Adrenal gland (tissue), 19 donors: ENCODE measurements at regions of chr15 and their contacts with region 1.

Region 1: GRCh38 chr15:31338879-31339557 is 12.4 kb downstream of the KLF13 start:
- DNase-seq: peak; percentile 53 to 93 (median 84)
- H3K4me3 ChIP-seq: no peak overlapping the region
- H3K27ac ChIP-seq: peak overlapping the region in 4 of 5 donors; percentile 56 to 73 (median 62)
- H3K4me1 ChIP-seq: peaks cover 25 to 83% of the 10 kb centered on the region in 2 donors
- H3K27me3 ChIP-seq: no peaks in the 10 kb centered on the region
- CTCF ChIP-seq: no peak
- POLR2A ChIP-seq: no peak

Region 2: GRCh38 chr15:31352911-31353811 is 14.1 kb after region 1 on chr15:
- intact Hi-C with region 1: loop called in 1 of 2 experiments (anchors 2 kb)
- DNase-seq: peak; percentile 60 to 96 (median 85)
- H3K4me3 ChIP-seq: peak overlapping the region in 1 of 4 donors; percentile 28
- H3K27ac ChIP-seq: peak overlapping the region; percentile 65 to 88 (median 73)
- H3K4me1 ChIP-seq: peaks cover 24 to 45% of the 10 kb centered on the region in 2 donors
- H3K27me3 ChIP-seq: no peaks in the 10 kb centered on the region
- CTCF ChIP-seq: no peak
- POLR2A ChIP-seq: peak in 1 of 2 donors; percentile 35

Region 3: DNA sequence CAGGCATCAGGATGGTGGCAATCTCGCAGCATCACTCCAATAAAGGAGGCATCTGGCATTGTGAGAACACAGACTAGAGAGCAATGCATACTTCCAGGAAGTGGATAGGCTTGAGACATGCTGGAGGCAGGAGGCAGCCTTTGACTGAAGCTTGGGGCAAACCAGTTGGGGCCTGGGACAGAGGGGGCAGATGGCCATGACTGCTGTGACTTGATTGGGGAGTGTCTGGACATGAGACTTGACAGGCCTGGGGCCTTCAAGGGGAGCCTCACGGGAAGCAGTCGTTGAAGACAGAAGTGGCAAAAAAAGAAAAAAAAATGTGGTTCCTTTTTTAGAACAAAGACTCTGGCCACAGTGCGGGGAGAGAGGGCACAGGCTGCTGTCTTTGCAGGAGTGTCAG is 646.6 kb after region 1 on chr15:
- intact Hi-C with region 1: no loop called
- DNase-seq: no peak
- H3K4me3 ChIP-seq: no peak overlapping the region
- H3K27ac ChIP-seq: no peak overlapping the region
- H3K4me1 ChIP-seq: no peaks in the 10 kb centered on the region
- H3K27me3 ChIP-seq: no peaks in the 10 kb centered on the region
- CTCF ChIP-seq: no peak
- POLR2A ChIP-seq: no peak